ENCODE measurements at regions of chr7 and their contacts with region 1.

Region 1: GRCh38 chr7:142188846-142189245 is 69.0 kb downstream of the PRSS58 start:
- DNase-seq: no peak

Region 2: DNA sequence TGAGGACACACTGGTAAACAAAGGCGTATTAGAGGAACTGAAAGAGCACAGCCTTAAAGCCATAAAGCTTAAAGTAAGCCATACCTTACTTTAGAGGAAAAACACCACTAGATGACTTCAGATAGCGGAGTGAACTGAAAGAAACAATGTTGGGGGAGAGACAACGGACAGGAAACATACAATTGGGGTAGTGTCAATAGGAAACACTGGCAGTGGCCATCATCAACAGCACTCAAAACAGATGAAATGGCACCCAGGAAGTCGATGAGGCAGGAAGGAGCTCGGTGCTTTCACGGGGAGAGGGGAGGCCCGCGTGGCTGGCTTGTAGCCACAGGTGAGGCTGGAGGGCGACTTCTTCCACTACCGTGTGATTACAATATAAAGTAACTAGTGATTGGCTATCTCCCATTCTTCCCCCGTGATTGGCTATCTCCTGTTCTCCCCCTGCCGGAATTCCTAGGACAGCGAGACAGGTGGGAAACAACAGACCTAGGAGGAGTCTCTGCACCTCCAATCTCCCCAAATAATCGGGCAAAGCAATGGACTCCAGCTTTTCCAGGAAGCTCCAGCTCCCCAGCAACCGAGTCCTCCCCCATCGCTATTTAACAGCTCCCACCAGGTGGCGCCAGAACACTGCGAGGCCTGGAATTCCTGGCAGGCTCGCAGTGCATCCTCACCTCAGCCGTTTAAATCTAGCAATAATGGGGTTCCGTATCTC is 212.9 kb before region 1 on chr7:
- intact Hi-C with region 1: loop called (anchors 2 kb)
- DNase-seq: peak; percentile 87

Measured in cardiac septum (tissue), 1 donor.